ENCODE measurements at regions of chr11 and their contacts with region 1.

Region 1: GRCh38 chr11:47538741-47539574 is 14.0 kb downstream of the CELF1 start:
- DNase-seq: no peak
- H3K4me3 Mint-ChIP-seq: no peak overlapping the region
- H3K27ac Mint-ChIP-seq: peak overlapping the region; percentile 93
- H3K4me1 Mint-ChIP-seq: peaks cover 25% of the 10 kb centered on the region
- H3K27me3 Mint-ChIP-seq: no peaks in the 10 kb centered on the region
- CTCF ChIP-seq: no peak

Region 2: DNA sequence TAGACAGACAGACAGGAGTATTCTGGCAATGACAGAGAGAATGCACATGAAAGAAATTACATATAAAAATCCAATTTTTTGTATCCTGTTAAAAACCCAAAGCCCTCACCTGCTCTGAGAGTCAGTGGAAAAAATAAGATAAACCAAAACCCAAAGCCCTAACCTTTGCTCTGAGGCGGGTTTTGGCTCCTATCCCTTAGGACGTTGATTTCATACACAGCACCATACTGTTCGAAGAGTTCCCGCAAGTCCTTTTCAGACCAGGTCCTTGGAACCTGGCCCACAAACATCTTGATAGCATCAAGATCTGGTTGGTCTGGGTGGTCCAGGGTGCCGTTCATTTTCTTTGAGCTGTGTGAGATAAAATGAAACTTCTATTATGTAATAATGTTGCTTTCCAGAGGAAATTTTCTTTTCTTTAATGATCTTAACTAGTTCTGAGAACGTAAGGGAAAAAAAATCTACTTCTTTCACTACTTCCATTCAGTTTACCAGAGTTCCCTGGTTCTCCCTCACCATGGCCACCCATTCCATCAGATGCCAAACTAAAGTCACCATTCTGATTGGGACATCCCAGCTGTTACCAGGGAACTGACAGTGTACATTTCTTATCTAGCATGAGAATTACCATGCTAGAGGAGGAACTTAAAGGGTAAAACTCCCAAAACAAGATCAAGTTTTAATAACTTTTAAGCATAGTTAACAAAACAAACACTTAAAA is 50.1 kb before region 1 on chr11:
- CTCF ChIA-PET with region 1: no interaction called
- POLR2A ChIA-PET with region 1: interaction called, 11 read pairs
- intact Hi-C with region 1: loop called (anchors 5 kb)
- DNase-seq: no peak
- H3K4me3 Mint-ChIP-seq: no peak overlapping the region
- H3K27ac Mint-ChIP-seq: no peak overlapping the region
- H3K4me1 Mint-ChIP-seq: peaks cover 3% of the 10 kb centered on the region
- H3K27me3 Mint-ChIP-seq: no peaks in the 10 kb centered on the region
- CTCF ChIP-seq: no peak

Region 3: DNA sequence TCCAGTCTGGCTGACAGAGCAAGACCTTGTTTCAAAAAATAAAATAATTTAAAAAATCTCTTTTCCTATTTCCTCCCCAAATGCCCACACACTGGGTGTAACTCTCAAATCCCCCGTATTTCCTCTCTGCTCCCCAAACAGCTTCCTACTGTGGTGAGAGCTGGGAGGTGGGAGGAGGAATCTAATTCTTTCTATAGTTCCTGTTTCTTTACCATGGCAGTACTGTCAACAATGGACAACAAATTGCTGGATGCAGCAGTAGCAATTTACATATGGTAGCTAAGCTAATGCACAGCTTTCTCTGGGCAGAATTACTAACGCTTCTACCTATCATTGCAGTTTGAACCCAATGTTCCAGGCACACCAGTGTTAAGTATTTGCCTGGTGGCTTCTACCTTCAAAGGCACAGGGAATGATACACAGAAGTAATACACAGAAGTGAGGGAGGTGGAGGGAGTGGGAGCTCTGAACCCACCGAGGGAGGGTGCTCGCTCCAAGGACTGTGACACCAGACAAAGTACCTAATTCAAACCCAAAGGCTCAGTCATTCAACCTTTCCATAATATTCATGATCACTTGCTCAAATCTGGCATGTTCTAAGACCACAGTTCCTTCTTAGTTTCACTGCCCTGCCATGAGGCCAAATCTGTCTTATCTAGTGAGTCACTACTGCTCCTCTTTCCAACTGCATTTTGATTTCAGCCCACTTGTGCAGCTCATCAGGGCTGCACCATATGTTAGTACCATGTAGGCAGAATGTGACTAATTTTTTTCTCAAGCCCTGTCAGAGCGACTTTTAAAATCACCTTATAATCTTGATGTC is 23.9 kb before region 1 on chr11:
- CTCF ChIA-PET with region 1: interaction called, 4 read pairs
- POLR2A ChIA-PET with region 1: interaction called, 11 read pairs
- intact Hi-C with region 1: no loop called
- DNase-seq: peak; percentile 59
- H3K4me3 Mint-ChIP-seq: no peak overlapping the region
- H3K27ac Mint-ChIP-seq: peak overlapping the region; percentile 29
- H3K4me1 Mint-ChIP-seq: peaks cover 39% of the 10 kb centered on the region
- H3K27me3 Mint-ChIP-seq: no peaks in the 10 kb centered on the region
- CTCF ChIP-seq: no peak

Region 4: DNA sequence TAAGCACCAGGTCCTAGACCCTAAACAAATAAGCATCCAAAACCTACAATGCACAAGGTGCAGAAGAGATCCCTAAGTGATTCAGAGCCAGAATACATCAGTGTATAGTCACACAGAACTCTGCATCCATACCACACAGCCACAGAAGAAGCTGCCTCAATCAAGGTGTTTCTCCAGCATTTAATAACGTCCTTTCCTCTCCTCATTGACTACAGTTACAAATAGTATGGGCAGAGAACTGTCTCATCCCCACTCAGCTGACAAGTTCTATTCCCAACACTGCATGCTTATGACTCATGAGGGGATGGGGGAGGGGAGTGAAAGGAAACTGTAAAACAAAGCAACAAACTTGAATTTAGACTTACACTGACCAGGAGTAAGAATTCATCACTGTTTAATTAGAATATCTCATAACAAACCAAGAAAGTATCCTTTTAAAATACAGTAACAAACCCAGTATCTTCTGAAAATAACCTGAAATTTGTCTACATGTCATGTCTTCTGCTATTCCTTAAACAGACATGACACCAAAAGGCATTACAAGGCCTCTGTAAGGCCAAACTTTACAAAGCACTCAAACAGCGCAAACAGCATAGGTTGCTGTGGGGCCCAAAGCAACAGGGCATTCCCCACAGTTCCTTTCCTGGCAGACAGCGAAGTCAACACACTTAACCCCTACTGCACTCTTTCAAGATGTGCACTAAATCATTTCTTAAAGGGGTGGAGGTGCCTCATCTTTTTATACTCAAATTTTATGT is 15.3 kb before region 1 on chr11:
- CTCF ChIA-PET with region 1: interaction called, 5 read pairs
- POLR2A ChIA-PET with region 1: interaction called, 44 read pairs
- intact Hi-C with region 1: no loop called
- DNase-seq: peak; percentile 83
- H3K4me3 Mint-ChIP-seq: peak overlapping the region; percentile 19
- H3K27ac Mint-ChIP-seq: peak overlapping the region; percentile 47
- H3K4me1 Mint-ChIP-seq: peaks cover 35% of the 10 kb centered on the region
- H3K27me3 Mint-ChIP-seq: no peaks in the 10 kb centered on the region
- CTCF ChIP-seq: no peak

Region 5: GRCh38 chr11:47565340-47566148 is 26.6 kb after region 1 on chr11 and contains the start of gene PTPMT1:
- CTCF ChIA-PET with region 1: interaction called, 4 read pairs
- POLR2A ChIA-PET with region 1: interaction called, 18 read pairs
- intact Hi-C with region 1: no loop called
- DNase-seq: peak; percentile 50
- H3K4me3 Mint-ChIP-seq: peak within 1 kb of the TSS; percentile 73
- H3K27ac Mint-ChIP-seq: no peak within 1 kb of the TSS
- H3K4me1 Mint-ChIP-seq: peaks cover under 1% of the 10 kb centered on the region
- H3K27me3 Mint-ChIP-seq: no peaks in the 10 kb centered on the region
- CTCF ChIP-seq: no peak
- total RNA-seq, gene PTPMT1: 44.6 and 49.0 TPM in 2 replicates